Activated naive CD4-positive, alpha-beta T cell treated with anti-CD3 and anti-CD28 coated beads for 36 hours (primary cell): ENCODE measurements at regions of chr3 and their contacts with region 1.

Region 1: DNA sequence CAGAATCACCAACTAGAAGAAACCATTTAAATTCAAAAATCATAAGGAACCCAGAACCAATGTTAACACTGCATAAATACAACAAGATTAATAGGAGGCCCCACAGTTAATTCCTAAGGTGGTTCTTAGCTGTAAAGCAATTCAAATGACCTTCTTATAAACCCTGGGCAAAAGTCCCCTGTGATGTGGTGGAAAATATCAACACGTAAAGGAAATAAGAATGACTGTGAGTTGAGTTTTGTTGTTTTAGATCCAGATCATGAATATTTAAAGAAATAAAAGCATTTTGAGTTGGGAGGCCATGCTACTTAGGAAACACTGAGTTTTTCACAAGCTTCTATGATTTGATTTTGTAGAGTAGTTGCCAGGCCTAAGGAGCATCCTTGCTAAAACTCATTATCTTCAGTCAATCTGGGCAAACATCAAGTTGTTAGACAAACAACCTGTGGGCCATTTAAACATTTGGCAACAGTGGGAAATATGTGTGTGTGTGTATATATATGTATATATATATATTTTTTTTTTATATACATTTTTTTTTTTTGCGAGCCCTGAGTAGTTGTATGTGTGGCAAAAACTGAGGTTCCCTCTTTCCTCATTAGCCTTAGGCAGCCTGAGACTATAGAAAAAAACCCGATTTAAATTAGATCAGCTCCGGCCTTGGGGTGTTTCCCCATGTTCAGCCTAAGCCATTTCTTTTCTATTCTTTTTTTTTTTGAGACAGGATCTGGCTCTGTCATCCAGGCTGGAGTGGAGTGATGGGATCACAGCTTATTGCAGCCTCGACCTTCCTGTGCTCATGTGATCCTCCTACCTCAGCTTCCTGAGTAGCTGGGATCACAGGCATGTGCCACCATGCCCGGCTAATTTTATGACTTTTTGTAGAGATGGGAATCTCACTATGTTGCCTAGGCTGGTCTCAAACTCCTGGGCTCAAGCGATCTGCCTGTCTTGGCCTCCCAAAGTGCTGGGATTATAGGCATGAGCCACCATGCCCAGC is 8.0 kb upstream of the PXK start:
- DNase-seq: peak; percentile 21
- H3K4me3 Mint-ChIP-seq: peak overlapping the region; percentile 16
- H3K27ac Mint-ChIP-seq: peak overlapping the region; percentile 89
- H3K4me1 Mint-ChIP-seq: peaks cover 42% of the 10 kb centered on the region
- H3K27me3 Mint-ChIP-seq: no peaks in the 10 kb centered on the region

Region 2: DNA sequence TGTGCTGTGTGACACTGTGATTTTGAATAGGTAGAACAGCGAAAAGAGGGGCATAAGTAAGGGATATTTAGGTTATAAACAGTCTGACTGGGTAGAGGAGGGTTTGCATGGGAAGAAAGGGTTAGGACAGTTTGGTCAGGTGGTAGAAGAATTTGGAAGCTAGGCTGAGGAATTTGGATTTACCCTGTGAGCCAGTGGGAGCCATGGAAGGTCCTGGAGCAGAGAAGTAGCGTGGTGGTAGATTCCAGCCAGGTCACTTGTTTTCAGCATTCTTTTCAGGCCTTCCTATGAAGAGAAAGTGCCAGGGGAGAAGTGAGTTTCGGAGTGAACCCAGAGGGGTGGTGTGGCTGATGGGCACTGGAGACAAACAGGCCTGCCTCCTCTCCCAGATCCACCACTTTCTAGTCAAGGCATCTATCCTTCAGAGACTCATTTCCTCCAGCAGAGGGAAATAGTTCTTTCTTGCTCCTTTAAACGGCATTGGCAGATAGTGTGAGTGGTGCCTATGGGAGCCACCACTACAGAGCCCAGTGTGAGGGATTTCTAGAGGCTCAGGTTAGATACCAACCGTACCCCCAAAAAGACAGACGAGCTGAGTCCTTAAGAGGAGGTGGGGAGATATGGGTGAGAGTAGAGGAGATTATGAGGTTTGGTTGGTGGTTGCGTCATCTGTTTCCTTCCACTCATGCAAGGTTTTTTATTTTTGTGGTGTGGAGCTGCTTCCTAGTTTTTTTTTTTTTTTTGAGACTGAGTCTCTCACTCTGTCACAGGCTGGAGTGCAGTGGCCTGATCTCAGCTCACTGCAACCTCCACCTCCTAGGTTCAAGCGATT is 29.2 kb after region 1 on chr3:
- CTCF ChIA-PET with region 1: interaction called, 3 read pairs
- intact Hi-C with region 1: loop called (anchors 2 kb)
- DNase-seq: peak; percentile 53
- H3K4me3 Mint-ChIP-seq: peak overlapping the region; percentile 60
- H3K27ac Mint-ChIP-seq: peak overlapping the region; percentile 87
- H3K4me1 Mint-ChIP-seq: peaks cover 41% of the 10 kb centered on the region
- H3K27me3 Mint-ChIP-seq: no peaks in the 10 kb centered on the region

Region 3: DNA sequence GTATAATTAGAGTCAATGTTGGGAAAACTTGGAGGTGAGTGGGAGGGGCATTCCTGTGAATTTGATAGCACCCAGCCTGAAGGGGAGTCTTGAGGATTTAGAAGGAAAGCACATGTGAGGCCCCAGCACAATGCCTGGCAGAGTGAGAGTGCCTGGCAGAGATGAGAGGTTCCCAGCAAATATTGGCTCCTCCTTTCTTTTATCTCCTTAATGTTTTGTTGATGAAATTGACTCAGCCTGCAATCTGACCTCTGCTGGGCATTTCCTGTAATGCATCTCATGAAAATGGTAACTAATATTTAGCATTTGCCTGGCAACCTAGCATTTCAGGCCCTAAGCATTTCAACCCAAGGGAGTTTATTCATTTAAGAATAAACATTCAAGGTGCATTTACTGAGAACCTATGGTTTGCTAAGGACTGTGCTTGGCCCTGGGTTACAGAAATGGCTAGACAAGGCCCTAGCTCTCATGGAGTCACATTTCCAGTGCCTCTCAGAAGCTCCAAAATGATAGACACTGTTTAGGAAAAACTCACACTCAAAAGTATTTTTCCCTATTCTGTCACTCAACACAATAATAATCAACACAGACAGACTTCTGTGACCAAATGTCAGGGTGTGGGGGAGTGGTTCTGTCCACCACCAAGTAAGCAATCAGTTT is 90.0 kb after region 1 on chr3:
- CTCF ChIA-PET with region 1: interaction called, 25 read pairs
- intact Hi-C with region 1: loop called (anchors 1 kb)
- DNase-seq: peak; percentile 68
- H3K4me3 Mint-ChIP-seq: no peak overlapping the region
- H3K27ac Mint-ChIP-seq: no peak overlapping the region
- H3K4me1 Mint-ChIP-seq: peaks cover 6% of the 10 kb centered on the region
- H3K27me3 Mint-ChIP-seq: no peaks in the 10 kb centered on the region

Region 4: DNA sequence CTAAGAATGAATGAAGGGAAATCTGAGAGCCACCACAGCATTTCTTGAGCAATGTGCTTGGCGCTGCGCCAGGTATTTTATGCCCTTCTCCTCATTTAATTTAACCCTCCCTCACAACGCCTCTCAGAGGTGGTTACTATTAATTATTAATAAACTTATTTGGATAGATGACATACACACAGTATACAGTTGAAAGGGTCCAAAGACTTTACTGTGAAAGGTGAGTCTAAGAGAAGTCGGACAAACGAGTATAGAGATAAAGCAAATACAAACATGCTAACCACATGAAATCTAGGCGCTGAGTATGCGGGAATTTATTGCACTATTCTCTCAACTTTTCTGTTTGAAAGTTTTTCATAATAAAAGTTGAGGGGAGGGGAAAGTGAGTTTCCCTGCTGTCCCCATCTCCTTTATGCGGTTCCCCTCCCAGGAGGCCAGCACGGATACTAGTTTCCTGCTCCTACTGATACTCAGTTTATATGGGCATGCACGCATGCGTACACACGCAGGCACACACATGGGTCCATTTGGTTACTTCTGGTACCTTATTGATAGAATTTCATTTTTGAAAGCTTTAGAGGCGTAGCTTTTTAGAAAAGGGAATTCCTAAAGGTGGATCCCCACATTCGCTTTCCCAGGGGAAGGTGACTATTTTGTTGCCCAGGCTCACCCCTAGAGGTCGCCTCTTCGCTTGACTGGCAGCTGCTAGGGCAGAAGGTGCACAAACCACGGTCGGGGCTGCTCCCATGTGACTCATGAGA is 138.7 kb after region 1 on chr3:
- CTCF ChIA-PET with region 1: interaction called, 3 read pairs
- intact Hi-C with region 1: loop called (anchors 2 kb)
- DNase-seq: peak; percentile 92
- H3K4me3 Mint-ChIP-seq: peak overlapping the region; percentile 16
- H3K27ac Mint-ChIP-seq: peak overlapping the region; percentile 61
- H3K4me1 Mint-ChIP-seq: peaks cover 15% of the 10 kb centered on the region
- H3K27me3 Mint-ChIP-seq: peaks cover 3% of the 10 kb centered on the region

Region 5: GRCh38 chr3:58471025-58471887 is 146.6 kb after region 1 on chr3:
- CTCF ChIA-PET with region 1: no interaction called
- intact Hi-C with region 1: loop called (anchors 1 kb)
- DNase-seq: peak; percentile 81
- H3K4me3 Mint-ChIP-seq: no peak overlapping the region
- H3K27ac Mint-ChIP-seq: peak overlapping the region; percentile 86
- H3K4me1 Mint-ChIP-seq: peaks cover 20% of the 10 kb centered on the region
- H3K27me3 Mint-ChIP-seq: no peaks in the 10 kb centered on the region